Endothelial cell of umbilical vein (primary cell): ENCODE measurements at regions of chr3 and their contacts with region 1.

Region 1: GRCh38 chr3:150183678-150184425 is 213.2 kb upstream of the PFN2 start:
- DNase-seq: peak; percentile 80
- H3K4me3 ChIP-seq: peak overlapping the region; percentile 8 to 51 (median 31)
- H3K27ac ChIP-seq: peak overlapping the region; percentile 18
- H3K4me1 ChIP-seq: peaks cover 16% of the 10 kb centered on the region
- H3K27me3 ChIP-seq: peaks cover 0 to 6% of the 10 kb centered on the region in 2 experiments
- CTCF ChIP-seq: peak; percentile 63 to 65
- POLR2A ChIP-seq: no peak

Region 2: GRCh38 chr3:149765762-149766334 is 418.0 kb before region 1 on chr3:
- CTCF ChIA-PET with region 1: interaction called, 20 read pairs
- POLR2A ChIA-PET with region 1: no interaction called
- dilution Hi-C with region 1: no loop called
- intact Hi-C with region 1: no loop called
- DNase-seq: peak; percentile 59
- H3K4me3 ChIP-seq: no peak overlapping the region
- H3K27ac ChIP-seq: no peak overlapping the region
- H3K4me1 ChIP-seq: no peaks in the 10 kb centered on the region
- H3K27me3 ChIP-seq: peaks cover 33 to 42% of the 10 kb centered on the region in 2 experiments
- CTCF ChIP-seq: peak; percentile 20 to 39
- POLR2A ChIP-seq: no peak

Region 3: GRCh38 chr3:149816986-149817385 is 366.9 kb before region 1 on chr3:
- CTCF ChIA-PET with region 1: no interaction called
- POLR2A ChIA-PET with region 1: no interaction called
- dilution Hi-C with region 1: no loop called
- intact Hi-C with region 1: no loop called
- DNase-seq: no peak
- H3K4me3 ChIP-seq: no peak overlapping the region
- H3K27ac ChIP-seq: no peak overlapping the region
- H3K4me1 ChIP-seq: peaks cover 24% of the 10 kb centered on the region
- H3K27me3 ChIP-seq: no peaks in the 10 kb centered on the region
- CTCF ChIP-seq: no peak
- POLR2A ChIP-seq: no peak

Region 4: DNA sequence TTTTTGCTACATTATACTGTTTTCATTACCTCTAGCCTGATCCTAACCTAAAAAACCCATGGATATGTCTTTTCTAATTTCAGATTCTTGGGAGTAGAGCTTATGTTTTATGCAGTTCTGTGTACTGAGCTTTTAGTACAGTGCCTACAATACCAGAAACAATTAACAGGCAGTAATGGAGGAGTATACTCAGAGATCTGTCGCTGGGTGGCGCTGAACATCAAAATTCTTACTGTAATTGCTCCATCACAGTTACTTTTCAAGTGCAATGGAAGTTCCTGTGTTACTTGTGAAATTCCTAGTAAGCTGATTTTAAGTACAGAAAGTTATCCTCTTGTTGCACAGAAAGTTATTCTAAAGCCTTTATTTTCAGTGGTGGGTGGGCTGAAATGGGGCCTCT is 304.0 kb before region 1 on chr3:
- CTCF ChIA-PET with region 1: interaction called, 40 read pairs
- POLR2A ChIA-PET with region 1: no interaction called
- dilution Hi-C with region 1: no loop called
- intact Hi-C with region 1: loop called (anchors 1 kb)
- DNase-seq: peak; percentile 77
- H3K4me3 ChIP-seq: no peak overlapping the region
- H3K27ac ChIP-seq: no peak overlapping the region
- H3K4me1 ChIP-seq: no peaks in the 10 kb centered on the region
- H3K27me3 ChIP-seq: no peaks in the 10 kb centered on the region
- CTCF ChIP-seq: peak; percentile 51 to 58
- POLR2A ChIP-seq: no peak

Region 5: DNA sequence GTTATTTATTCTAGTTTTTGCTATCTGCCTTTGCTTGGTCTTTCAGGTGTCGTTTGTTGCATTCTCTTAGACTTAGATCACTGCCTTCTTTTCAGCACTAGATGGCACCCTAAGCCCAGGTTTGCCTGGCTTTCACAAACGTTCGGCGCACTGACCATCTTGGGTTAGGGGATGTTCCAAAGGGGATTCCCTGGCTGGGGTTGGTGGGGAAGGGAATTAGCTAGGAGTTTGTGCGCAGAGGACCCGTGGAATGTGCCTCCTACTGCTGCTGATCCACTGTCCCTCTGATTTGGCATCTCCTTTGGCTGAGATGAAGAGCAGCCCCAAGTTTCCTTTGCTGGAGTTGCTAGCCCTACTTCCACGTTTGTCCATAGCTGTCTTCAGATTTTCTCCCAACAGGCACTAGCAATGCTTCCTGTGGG is 247.0 kb before region 1 on chr3:
- CTCF ChIA-PET with region 1: interaction called, 78 read pairs
- POLR2A ChIA-PET with region 1: no interaction called
- dilution Hi-C with region 1: no loop called
- intact Hi-C with region 1: loop called (anchors 1 kb)
- DNase-seq: peak; percentile 70
- H3K4me3 ChIP-seq: no peak overlapping the region
- H3K27ac ChIP-seq: no peak overlapping the region
- H3K4me1 ChIP-seq: peaks cover 2% of the 10 kb centered on the region
- H3K27me3 ChIP-seq: no peaks in the 10 kb centered on the region
- CTCF ChIP-seq: peak; percentile 70 to 76
- POLR2A ChIP-seq: no peak

Region 6: GRCh38 chr3:149958171-149958796 is 225.6 kb before region 1 on chr3:
- CTCF ChIA-PET with region 1: interaction called, 10 read pairs
- POLR2A ChIA-PET with region 1: no interaction called
- dilution Hi-C with region 1: no loop called
- intact Hi-C with region 1: no loop called
- DNase-seq: no peak
- H3K4me3 ChIP-seq: no peak overlapping the region
- H3K27ac ChIP-seq: no peak overlapping the region
- H3K4me1 ChIP-seq: peaks cover 14% of the 10 kb centered on the region
- H3K27me3 ChIP-seq: no peaks in the 10 kb centered on the region
- CTCF ChIP-seq: no peak
- POLR2A ChIP-seq: no peak

Region 7: GRCh38 chr3:150194513-150194912 is 10.7 kb after region 1 on chr3:
- CTCF ChIA-PET with region 1: interaction called, 14 read pairs
- POLR2A ChIA-PET with region 1: no interaction called
- dilution Hi-C with region 1: no loop called
- intact Hi-C with region 1: no loop called
- DNase-seq: no peak
- H3K4me3 ChIP-seq: no peak overlapping the region
- H3K27ac ChIP-seq: no peak overlapping the region
- H3K4me1 ChIP-seq: no peaks in the 10 kb centered on the region
- H3K27me3 ChIP-seq: peaks cover 7 to 9% of the 10 kb centered on the region in 2 experiments
- CTCF ChIP-seq: no peak
- POLR2A ChIP-seq: no peak

Region 8: GRCh38 chr3:150202711-150203110 is 18.9 kb after region 1 on chr3:
- CTCF ChIA-PET with region 1: interaction called, 14 read pairs
- POLR2A ChIA-PET with region 1: no interaction called
- dilution Hi-C with region 1: no loop called
- intact Hi-C with region 1: no loop called
- DNase-seq: no peak
- H3K4me3 ChIP-seq: no peak overlapping the region
- H3K27ac ChIP-seq: no peak overlapping the region
- H3K4me1 ChIP-seq: no peaks in the 10 kb centered on the region
- H3K27me3 ChIP-seq: peaks cover 38 to 39% of the 10 kb centered on the region in 2 experiments
- CTCF ChIP-seq: no peak
- POLR2A ChIP-seq: no peak